ENCODE measurements at regions of chr12 and their contacts with region 1.

Region 1: DNA sequence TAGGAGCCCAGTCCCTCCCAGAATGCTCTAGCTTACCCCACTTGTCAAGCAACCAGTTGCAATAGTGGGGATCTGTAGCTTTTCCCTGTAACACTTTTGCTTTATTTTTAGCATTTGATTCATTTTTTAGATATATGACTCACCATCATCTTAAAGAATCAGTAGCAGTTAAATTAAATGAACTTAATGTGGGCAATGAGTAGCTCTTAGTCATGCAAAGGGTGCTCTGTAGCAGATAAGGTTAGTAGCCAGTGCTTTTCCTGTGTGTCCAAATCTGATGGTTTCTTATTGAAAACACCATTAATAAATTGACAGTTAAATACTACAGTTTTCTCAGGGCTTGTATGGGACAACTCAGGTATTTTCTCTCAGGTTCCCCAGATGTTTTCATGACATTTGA is 311.8 kb downstream of the RERGL start:
- DNase-seq: no peak
- H3K4me3 Mint-ChIP-seq: no peak overlapping the region
- H3K27ac Mint-ChIP-seq: no peak overlapping the region
- H3K4me1 Mint-ChIP-seq: no peaks in the 10 kb centered on the region
- H3K27me3 Mint-ChIP-seq: no peaks in the 10 kb centered on the region

Region 2: GRCh38 chr12:17829813-17830212 is 51.6 kb after region 1 on chr12:
- intact Hi-C with region 1: no loop called
- DNase-seq: no peak
- H3K4me3 Mint-ChIP-seq: no peak overlapping the region
- H3K27ac Mint-ChIP-seq: no peak overlapping the region
- H3K4me1 Mint-ChIP-seq: no peaks in the 10 kb centered on the region
- H3K27me3 Mint-ChIP-seq: no peaks in the 10 kb centered on the region

Region 3: GRCh38 chr12:17866802-17867201 is 88.6 kb after region 1 on chr12:
- intact Hi-C with region 1: loop called (anchors 5 kb)
- DNase-seq: no peak
- H3K4me3 Mint-ChIP-seq: no peak overlapping the region
- H3K27ac Mint-ChIP-seq: no peak overlapping the region
- H3K4me1 Mint-ChIP-seq: no peaks in the 10 kb centered on the region
- H3K27me3 Mint-ChIP-seq: no peaks in the 10 kb centered on the region